ENCODE measurements at regions of chr6 and their contacts with region 1.

Region 1: GRCh38 chr6:26285143-26286134 is 79.6 kb upstream of the BTN3A2 start:
- H3K4me3 Mint-ChIP-seq: peak overlapping the region; percentile 77
- H3K27ac Mint-ChIP-seq: peak overlapping the region; percentile 98
- H3K4me1 Mint-ChIP-seq: peaks cover 17% of the 10 kb centered on the region
- H3K27me3 Mint-ChIP-seq: no peaks in the 10 kb centered on the region

Region 2: GRCh38 chr6:26240154-26241032 is 45.0 kb before region 1 on chr6:
- intact Hi-C with region 1: loop called (anchors 5 kb)
- H3K4me3 Mint-ChIP-seq: peak overlapping the region; percentile 74
- H3K27ac Mint-ChIP-seq: peak overlapping the region; percentile 95
- H3K4me1 Mint-ChIP-seq: peaks cover 19% of the 10 kb centered on the region
- H3K27me3 Mint-ChIP-seq: no peaks in the 10 kb centered on the region

Region 3: DNA sequence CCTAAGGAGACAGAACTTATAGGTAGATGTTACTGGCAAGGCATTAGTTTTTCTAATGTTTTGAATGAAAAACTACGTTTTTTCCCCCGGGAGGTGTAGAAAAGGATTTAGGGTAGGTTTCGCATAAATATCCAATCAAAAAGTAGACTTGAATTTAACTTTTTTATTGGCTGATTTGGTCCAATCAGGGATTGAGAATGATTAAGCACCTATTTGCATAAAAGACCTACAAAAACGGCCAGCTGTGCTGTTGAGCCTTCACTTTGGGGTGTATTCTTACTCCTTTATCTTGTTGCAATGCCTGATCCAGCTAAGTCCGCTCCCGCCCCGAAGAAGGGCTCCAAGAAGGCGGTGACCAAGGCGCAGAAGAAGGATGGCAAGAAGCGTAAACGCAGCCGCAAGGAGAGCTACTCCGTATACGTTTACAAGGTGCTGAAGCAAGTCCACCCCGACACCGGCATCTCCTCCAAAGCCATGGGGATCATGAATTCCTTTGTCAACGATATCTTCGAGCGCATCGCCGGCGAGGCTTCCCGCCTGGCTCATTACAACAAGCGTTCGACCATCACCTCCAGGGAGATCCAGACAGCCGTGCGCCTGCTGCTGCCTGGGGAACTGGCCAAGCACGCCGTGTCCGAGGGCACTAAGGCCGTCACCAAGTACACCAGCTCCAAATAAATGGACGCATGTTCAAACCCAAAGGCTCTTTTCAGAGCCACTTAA is 33.9 kb before region 1 on chr6:
- intact Hi-C with region 1: loop called (anchors 1 kb)
- H3K4me3 Mint-ChIP-seq: peak overlapping the region; percentile 80
- H3K27ac Mint-ChIP-seq: peak overlapping the region; percentile 95
- H3K4me1 Mint-ChIP-seq: peaks cover 26% of the 10 kb centered on the region
- H3K27me3 Mint-ChIP-seq: no peaks in the 10 kb centered on the region

Region 4: GRCh38 chr6:26270903-26271667 is 14.4 kb before region 1 on chr6:
- intact Hi-C with region 1: loop called (anchors 1 kb)
- H3K4me3 Mint-ChIP-seq: peak overlapping the region; percentile 60
- H3K27ac Mint-ChIP-seq: no peak overlapping the region
- H3K4me1 Mint-ChIP-seq: peaks cover 11% of the 10 kb centered on the region
- H3K27me3 Mint-ChIP-seq: no peaks in the 10 kb centered on the region